MCF 10A (cell line): ENCODE measurements at regions of chr6 and their contacts with region 1.

Region 1: DNA sequence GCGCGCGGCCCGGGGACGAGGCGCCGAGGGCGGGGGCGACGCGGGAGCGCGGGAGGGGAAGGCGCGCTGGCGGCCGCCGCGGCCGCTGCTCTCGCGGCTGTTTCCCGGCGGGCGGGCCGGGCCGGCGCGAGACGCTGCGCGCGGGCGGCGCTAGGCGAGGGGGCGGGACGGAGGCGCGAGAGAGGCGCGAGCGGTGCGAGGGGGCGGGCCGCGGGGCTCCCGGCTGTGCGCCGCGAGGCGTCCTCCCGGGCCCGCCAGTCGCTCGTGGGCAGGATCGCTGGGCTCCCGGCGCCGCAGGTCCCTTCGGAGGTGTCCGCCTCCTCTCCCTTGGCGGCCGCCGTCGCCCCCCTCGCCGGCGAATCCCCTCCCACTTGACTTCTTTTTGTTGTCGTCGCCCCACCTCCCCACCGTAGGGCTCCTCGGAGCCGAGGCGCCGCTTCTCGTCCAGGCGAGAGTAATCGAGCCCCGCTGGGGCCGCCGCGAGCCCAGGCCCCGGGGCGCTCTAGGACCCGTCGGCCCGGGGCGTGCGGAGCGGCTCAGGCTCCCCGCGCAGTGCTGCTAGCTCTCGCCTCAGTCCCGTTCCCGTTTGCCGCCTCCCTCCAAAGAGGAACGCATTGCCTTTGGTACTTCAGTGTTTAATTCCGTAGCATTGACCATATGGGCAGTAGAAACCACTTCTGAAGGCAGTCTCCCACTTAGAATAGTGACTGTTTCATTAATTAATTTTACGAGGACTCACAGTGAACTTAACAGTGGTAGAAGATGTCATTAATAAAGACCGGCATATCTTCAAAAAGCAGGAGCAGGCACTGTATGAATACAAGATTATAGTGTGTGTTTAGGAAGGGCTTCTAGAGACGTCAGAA is at the start of gene RANBP9:
- DNase-seq: peak; percentile 82
- H3K4me3 Mint-ChIP-seq: peak within 1 kb of the TSS; percentile 99
- H3K27ac Mint-ChIP-seq: peak within 1 kb of the TSS; percentile 93
- H3K4me1 Mint-ChIP-seq: peaks cover 24% of the 10 kb centered on the region
- H3K27me3 Mint-ChIP-seq: no peaks in the 10 kb centered on the region
- CTCF ChIP-seq: no peak
- total RNA-seq, gene RANBP9: 42.0 and 48.0 TPM in 2 replicates

Region 2: GRCh38 chr6:13624871-13625288 is 87.1 kb before region 1 on chr6:
- CTCF ChIA-PET with region 1: no interaction called
- POLR2A ChIA-PET with region 1: interaction called, 10 read pairs
- intact Hi-C with region 1: loop called (anchors 2 kb)
- DNase-seq: peak; percentile 45
- H3K4me3 Mint-ChIP-seq: no peak overlapping the region
- H3K27ac Mint-ChIP-seq: no peak overlapping the region
- H3K4me1 Mint-ChIP-seq: peaks cover 9% of the 10 kb centered on the region
- H3K27me3 Mint-ChIP-seq: no peaks in the 10 kb centered on the region
- CTCF ChIP-seq: peak; percentile 44

Region 3: DNA sequence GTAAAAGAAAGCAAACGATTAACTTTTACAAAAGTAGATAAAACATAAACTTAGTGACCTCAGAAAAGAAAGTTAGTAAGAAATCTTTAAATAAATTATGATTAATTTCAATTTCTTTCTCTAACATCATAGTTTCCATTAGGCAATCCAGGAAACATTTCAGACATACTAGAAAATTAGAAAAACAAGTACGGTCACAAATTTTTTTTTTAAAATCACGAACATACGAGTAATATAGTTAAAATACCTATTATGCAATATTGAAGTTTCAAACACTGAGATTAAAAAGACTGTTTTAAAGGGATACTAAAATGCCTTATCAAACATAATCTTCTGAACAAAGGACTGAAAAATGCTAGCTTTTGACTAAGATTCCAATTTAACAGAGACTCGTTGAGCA is 70.7 kb before region 1 on chr6:
- CTCF ChIA-PET with region 1: no interaction called
- POLR2A ChIA-PET with region 1: no interaction called
- intact Hi-C with region 1: no loop called
- DNase-seq: no peak
- H3K4me3 Mint-ChIP-seq: no peak overlapping the region
- H3K27ac Mint-ChIP-seq: no peak overlapping the region
- H3K4me1 Mint-ChIP-seq: no peaks in the 10 kb centered on the region
- H3K27me3 Mint-ChIP-seq: no peaks in the 10 kb centered on the region
- CTCF ChIP-seq: no peak

Region 4: DNA sequence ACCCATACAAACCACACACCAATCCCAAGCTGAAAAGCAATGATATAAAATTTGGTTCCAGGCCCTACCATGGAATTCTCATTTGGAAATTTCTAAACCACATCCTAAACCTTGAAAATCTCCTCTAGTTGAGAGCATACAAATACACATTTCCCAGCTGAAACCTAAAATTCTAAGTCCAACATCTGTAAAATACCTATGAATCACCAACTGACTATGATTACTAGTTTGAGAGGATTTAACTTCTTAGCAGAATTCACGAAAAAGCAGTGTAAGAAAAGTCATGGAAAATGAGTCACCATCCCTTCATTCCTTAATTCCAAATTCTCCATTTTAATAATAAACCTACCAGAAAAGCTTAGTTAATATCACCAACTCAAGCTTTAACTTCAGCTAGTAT is 15.7 kb before region 1 on chr6:
- CTCF ChIA-PET with region 1: interaction called, 4 read pairs
- POLR2A ChIA-PET with region 1: interaction called, 19 read pairs
- intact Hi-C with region 1: no loop called
- DNase-seq: peak; percentile 2
- H3K4me3 Mint-ChIP-seq: no peak overlapping the region
- H3K27ac Mint-ChIP-seq: no peak overlapping the region
- H3K4me1 Mint-ChIP-seq: peaks cover 23% of the 10 kb centered on the region
- H3K27me3 Mint-ChIP-seq: no peaks in the 10 kb centered on the region
- CTCF ChIP-seq: no peak

Region 5: GRCh38 chr6:13733178-13733887 is 21.4 kb after region 1 on chr6:
- CTCF ChIA-PET with region 1: no interaction called
- POLR2A ChIA-PET with region 1: interaction called, 41 read pairs
- intact Hi-C with region 1: loop called (anchors 2 kb)
- DNase-seq: peak; percentile 86
- H3K4me3 Mint-ChIP-seq: peak overlapping the region; percentile 69
- H3K27ac Mint-ChIP-seq: peak overlapping the region; percentile 68
- H3K4me1 Mint-ChIP-seq: peaks cover 23% of the 10 kb centered on the region
- H3K27me3 Mint-ChIP-seq: no peaks in the 10 kb centered on the region
- CTCF ChIP-seq: no peak

Region 6: DNA sequence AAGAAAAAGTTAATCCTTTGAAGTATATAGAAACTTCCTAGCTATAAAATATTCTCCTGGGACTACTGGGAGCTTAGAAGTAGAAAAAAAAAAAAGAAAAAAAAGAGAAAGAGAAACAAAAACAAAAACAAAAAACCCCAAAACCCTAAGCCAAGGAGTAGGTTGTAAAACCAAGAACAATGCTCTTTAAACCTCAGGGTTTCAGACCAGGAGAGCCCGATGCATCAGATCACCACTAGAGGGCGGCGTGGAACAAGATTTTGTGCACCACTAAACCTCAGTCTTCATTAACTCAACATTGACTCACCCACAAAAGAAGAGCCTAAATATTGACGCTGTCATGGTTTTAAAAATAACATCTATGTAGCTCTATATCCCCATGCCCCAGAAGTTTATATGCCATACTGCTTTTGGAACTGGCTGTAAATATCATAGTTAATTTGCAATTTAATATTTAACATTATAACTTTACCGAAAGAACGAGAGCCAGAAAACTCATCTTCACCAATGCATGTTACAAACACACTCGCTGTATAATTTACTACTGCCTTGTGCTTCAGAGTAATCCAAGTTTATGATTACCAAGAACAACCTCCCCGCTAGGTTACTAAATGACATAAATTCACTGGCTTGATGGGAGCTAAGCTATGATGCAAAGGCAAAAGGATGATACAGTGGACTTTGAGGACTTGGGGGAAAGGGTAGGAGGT is 83.2 kb after region 1 on chr6:
- CTCF ChIA-PET with region 1: interaction called, 3 read pairs
- POLR2A ChIA-PET with region 1: interaction called, 7 read pairs
- intact Hi-C with region 1: loop called (anchors 1 kb)
- DNase-seq: peak; percentile 87
- H3K4me3 Mint-ChIP-seq: no peak overlapping the region
- H3K27ac Mint-ChIP-seq: no peak overlapping the region
- H3K4me1 Mint-ChIP-seq: peaks cover 5% of the 10 kb centered on the region
- H3K27me3 Mint-ChIP-seq: no peaks in the 10 kb centered on the region
- CTCF ChIP-seq: peak; percentile 83

Region 7: GRCh38 chr6:13838616-13839015 is 126.7 kb after region 1 on chr6:
- CTCF ChIA-PET with region 1: no interaction called
- POLR2A ChIA-PET with region 1: no interaction called
- intact Hi-C with region 1: no loop called
- DNase-seq: no peak
- H3K4me3 Mint-ChIP-seq: no peak overlapping the region
- H3K27ac Mint-ChIP-seq: no peak overlapping the region
- H3K4me1 Mint-ChIP-seq: no peaks in the 10 kb centered on the region
- H3K27me3 Mint-ChIP-seq: peaks cover 14% of the 10 kb centered on the region
- CTCF ChIP-seq: no peak

Region 8: GRCh38 chr6:14165091-14165490 is 453.1 kb after region 1 on chr6:
- CTCF ChIA-PET with region 1: no interaction called
- POLR2A ChIA-PET with region 1: no interaction called
- intact Hi-C with region 1: no loop called
- DNase-seq: peak; percentile 74
- H3K4me3 Mint-ChIP-seq: no peak overlapping the region
- H3K27ac Mint-ChIP-seq: no peak overlapping the region
- H3K4me1 Mint-ChIP-seq: peaks cover 13% of the 10 kb centered on the region
- H3K27me3 Mint-ChIP-seq: no peaks in the 10 kb centered on the region
- CTCF ChIP-seq: no peak

Region 9: GRCh38 chr6:14254505-14254904 is 542.5 kb after region 1 on chr6:
- CTCF ChIA-PET with region 1: no interaction called
- POLR2A ChIA-PET with region 1: no interaction called
- intact Hi-C with region 1: no loop called
- DNase-seq: no peak
- H3K4me3 Mint-ChIP-seq: no peak overlapping the region
- H3K27ac Mint-ChIP-seq: no peak overlapping the region
- H3K4me1 Mint-ChIP-seq: no peaks in the 10 kb centered on the region
- H3K27me3 Mint-ChIP-seq: no peaks in the 10 kb centered on the region
- CTCF ChIP-seq: no peak